ENCODE measurements at regions of chrX and their contacts with region 1.

Region 1: DNA sequence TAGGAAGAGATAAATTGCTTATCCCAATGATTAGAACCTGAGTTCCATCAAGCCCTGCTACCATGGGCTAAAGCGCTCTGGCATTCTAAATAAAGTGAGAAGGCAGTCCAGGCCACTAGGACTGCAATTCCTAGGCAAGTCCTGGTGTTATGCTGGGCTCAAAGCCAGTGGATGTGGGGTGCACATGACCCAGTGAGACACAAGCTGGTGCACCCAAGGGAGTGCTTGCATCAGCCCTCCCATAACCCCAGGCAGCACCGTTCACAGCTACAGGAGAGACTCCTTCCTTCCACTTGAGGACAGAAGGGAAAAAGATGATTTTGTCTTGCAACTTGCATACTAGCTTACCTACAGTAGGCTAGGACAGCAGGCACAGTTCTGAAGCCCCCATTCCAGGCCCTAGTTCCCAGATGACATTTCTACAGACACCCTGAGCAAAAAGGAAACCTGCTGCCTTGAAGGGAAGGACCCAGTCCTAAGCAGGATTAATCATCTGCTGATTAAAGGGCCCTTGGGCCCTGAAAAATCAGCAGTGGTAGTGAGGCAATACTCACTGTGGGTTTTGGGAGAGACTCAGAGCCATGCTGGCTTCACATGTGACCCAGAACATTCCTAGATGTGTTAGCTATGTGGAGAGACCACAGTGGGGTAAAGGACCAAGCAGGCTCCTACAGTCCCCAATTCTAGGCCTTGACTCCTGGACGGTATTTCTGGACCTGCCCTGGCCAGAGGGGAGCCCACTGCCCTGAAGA is 77.8 kb downstream of the KLHL13 start:
- DNase-seq: no peak
- ATAC-seq: no peak

Region 2: DNA sequence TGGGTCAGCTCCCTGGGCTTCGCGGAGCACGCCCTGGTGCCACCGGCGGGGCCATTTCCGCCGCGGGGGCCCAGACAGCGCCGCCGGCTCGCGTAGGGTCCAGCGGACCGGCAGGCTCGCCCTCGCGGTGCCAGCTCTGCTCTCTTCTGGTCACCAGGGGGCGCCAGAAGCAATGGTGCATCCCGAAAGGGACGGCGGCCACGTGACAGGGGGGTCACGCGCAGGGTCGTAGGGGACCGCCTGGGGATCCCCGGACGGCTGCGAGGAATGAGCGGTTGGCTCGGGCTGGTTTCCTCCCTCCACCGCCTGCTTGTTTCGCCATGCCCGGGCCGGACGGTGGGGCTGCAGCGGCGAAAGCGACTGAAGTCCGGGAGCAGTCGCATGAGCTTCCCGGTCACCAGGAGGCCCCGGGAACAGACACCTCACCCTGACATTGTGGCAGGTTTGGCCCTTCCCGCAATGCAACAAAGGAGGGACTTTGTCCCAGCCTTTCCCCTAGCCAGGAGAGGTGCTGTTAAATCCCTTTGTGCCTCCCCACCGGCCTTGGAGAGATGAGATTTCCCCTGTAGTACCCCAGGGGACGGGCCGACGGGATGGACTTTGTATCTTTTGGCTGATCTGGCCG is 800.7 kb after region 1 on chrX:
- intact Hi-C with region 1: loop called (anchors 5 kb)
- DNase-seq: peak; percentile 92
- ATAC-seq: peak; percentile 92

Measured in sciatic nerve (tissue), 2 donors.